Activated naive CD4-positive, alpha-beta T cell treated with anti-CD3 and anti-CD28 coated beads for 36 hours (primary cell): ENCODE measurements at regions of chr6 and their contacts with region 1.

Region 1: DNA sequence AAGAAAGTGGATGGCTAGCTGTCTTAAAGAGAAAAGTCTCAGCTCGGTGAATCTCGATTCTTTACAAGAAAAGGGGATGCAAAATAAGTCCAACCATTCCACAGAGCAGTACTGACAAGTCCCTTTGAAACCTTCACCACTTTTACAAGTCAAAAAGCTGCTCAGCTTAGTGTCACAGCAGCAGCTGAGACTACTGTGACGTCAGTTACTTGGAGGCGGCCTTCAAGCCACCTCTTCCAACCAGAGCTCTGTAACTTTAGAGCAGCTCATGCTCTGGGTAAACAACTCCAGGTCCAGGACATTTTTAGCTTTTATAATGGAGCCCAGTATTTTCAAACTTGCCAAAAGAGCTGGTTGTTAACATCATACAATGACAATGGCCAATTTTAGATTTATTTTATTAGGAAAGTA is at the start of gene KIAA0408:
- DNase-seq: no peak
- H3K4me3 Mint-ChIP-seq: no peak within 1 kb of the TSS
- H3K27ac Mint-ChIP-seq: no peak within 1 kb of the TSS
- H3K4me1 Mint-ChIP-seq: no peaks in the 10 kb centered on the region
- H3K27me3 Mint-ChIP-seq: no peaks in the 10 kb centered on the region
- total RNA-seq, gene KIAA0408: 2.0 to 3.1 TPM

Region 2: GRCh38 chr6:127484212-127484858 is 25.1 kb after region 1 on chr6:
- CTCF ChIA-PET with region 1: no interaction called
- intact Hi-C with region 1: no loop called
- DNase-seq: peak; percentile 11
- H3K4me3 Mint-ChIP-seq: no peak overlapping the region
- H3K27ac Mint-ChIP-seq: no peak overlapping the region
- H3K4me1 Mint-ChIP-seq: peaks cover 28% of the 10 kb centered on the region
- H3K27me3 Mint-ChIP-seq: peaks cover 4% of the 10 kb centered on the region

Region 3: GRCh38 chr6:127539272-127539671 is 80.0 kb after region 1 on chr6:
- CTCF ChIA-PET with region 1: interaction called, 83 read pairs
- intact Hi-C with region 1: no loop called
- DNase-seq: no peak
- H3K4me3 Mint-ChIP-seq: no peak overlapping the region
- H3K27ac Mint-ChIP-seq: no peak overlapping the region
- H3K4me1 Mint-ChIP-seq: no peaks in the 10 kb centered on the region
- H3K27me3 Mint-ChIP-seq: peaks cover 13% of the 10 kb centered on the region